Activated CD4-positive, alpha-beta memory T cell treated with anti-CD3 and anti-CD28 coated beads for 36 hours (primary cell): ENCODE measurements at regions of chr18 and their contacts with region 1.

Region 1: DNA sequence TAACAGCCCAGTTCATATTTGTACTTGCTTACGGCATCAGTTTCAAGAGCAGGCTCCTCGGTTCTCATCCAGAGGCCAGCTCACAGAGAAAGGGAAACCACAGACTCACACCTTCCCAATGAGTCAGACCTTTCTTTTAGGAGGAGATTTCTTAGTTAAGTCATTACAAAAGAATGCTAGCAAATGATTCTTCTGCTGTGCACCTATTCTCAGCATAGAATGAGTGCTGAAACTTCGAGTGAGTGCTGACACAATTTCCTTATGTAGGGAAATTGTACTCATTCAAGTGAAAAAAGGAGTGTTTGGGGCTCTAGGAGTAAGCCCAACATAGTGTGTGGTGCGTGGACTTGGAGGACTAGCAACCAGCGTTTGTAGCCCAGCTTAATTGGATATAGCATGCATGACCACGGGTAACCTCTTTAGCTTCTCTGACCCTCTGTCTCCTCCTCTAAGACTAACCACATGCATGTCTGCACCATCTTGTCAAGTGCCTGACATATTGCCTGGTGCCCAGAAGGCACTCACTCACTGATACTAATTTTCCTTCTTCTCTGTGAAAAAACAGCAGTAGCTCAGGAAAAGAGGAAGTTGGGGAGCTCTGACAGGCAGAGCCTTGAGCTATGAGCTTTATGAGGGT is 87.0 kb downstream of the ALPK2 start:
- DNase-seq: peak; percentile 80
- H3K4me3 Mint-ChIP-seq: no peak overlapping the region
- H3K27ac Mint-ChIP-seq: peak overlapping the region; percentile 89
- H3K4me1 Mint-ChIP-seq: peaks cover 80% of the 10 kb centered on the region
- H3K27me3 Mint-ChIP-seq: peaks cover 3% of the 10 kb centered on the region

Region 2: GRCh38 chr18:58392324-58393000 is 149.4 kb before region 1 on chr18:
- CTCF ChIA-PET with region 1: no interaction called
- POLR2A ChIA-PET with region 1: no interaction called
- intact Hi-C with region 1: no loop called
- DNase-seq: no peak
- H3K4me3 Mint-ChIP-seq: no peak overlapping the region
- H3K27ac Mint-ChIP-seq: no peak overlapping the region
- H3K4me1 Mint-ChIP-seq: peaks cover 5% of the 10 kb centered on the region
- H3K27me3 Mint-ChIP-seq: no peaks in the 10 kb centered on the region

Region 3: DNA sequence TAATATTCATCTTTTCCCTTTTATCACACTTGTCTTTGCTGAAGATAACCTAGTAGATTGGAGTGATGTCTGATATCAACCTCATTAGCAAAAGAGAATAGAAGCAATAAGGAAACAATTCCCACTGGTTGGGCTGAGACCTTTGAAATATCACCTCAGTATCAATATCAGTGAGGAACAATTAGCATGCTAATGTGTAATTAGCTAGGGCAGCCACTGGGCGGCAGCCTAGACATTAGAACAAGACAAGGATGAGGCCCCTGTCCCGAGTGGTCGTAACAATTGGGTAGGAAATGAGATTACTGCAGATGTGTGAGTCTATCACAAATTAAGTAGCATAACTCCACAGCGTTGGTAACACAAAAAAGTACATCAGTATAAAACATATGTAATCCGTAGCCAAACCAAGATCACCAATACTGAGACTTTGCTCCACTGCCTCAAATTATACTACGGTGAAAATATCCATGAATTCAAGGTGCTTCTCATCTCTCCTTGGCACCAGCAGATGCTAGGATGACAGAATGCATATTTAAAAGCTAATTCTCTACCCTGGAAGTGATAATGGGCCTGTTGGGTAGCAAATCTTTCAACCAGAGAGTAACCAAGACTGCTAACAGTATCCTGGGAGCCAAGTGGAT is 12.1 kb before region 1 on chr18:
- CTCF ChIA-PET with region 1: interaction called, 10 read pairs
- POLR2A ChIA-PET with region 1: no interaction called
- intact Hi-C with region 1: loop called (anchors 1 kb)
- DNase-seq: peak; percentile 76
- H3K4me3 Mint-ChIP-seq: no peak overlapping the region
- H3K27ac Mint-ChIP-seq: peak overlapping the region; percentile 43
- H3K4me1 Mint-ChIP-seq: peaks cover 19% of the 10 kb centered on the region
- H3K27me3 Mint-ChIP-seq: peaks cover 6% of the 10 kb centered on the region

Region 4: DNA sequence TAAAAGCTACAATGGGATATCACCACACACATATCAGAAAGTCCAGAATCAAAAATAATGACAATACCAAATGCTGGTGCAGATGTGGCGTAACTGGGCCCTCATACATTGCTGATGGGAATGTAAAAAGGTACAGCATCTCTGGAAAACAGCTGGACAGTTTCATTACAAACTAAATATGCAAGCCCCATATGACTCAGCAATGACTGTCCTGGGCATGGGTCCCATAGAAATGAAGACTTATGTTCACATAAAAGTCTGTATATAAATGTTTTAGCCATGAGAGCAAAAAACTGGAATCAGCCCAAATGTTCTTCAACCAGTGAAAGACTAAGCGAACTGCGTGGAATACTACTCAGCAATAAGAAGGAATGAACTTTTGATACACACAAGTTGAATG is 30.3 kb after region 1 on chr18:
- CTCF ChIA-PET with region 1: no interaction called
- POLR2A ChIA-PET with region 1: interaction called, 6 read pairs
- intact Hi-C with region 1: loop called (anchors 1 kb)
- DNase-seq: no peak
- H3K4me3 Mint-ChIP-seq: no peak overlapping the region
- H3K27ac Mint-ChIP-seq: no peak overlapping the region
- H3K4me1 Mint-ChIP-seq: peaks cover 15% of the 10 kb centered on the region
- H3K27me3 Mint-ChIP-seq: no peaks in the 10 kb centered on the region

Region 5: GRCh38 chr18:58615140-58616132 is 73.5 kb after region 1 on chr18:
- CTCF ChIA-PET with region 1: interaction called, 5 read pairs
- POLR2A ChIA-PET with region 1: interaction called, 11 read pairs
- intact Hi-C with region 1: loop called (anchors 1 kb)
- DNase-seq: peak; percentile 87
- H3K4me3 Mint-ChIP-seq: peak overlapping the region; percentile 51
- H3K27ac Mint-ChIP-seq: peak overlapping the region; percentile 90
- H3K4me1 Mint-ChIP-seq: peaks cover 54% of the 10 kb centered on the region
- H3K27me3 Mint-ChIP-seq: peaks cover 4% of the 10 kb centered on the region

Region 6: DNA sequence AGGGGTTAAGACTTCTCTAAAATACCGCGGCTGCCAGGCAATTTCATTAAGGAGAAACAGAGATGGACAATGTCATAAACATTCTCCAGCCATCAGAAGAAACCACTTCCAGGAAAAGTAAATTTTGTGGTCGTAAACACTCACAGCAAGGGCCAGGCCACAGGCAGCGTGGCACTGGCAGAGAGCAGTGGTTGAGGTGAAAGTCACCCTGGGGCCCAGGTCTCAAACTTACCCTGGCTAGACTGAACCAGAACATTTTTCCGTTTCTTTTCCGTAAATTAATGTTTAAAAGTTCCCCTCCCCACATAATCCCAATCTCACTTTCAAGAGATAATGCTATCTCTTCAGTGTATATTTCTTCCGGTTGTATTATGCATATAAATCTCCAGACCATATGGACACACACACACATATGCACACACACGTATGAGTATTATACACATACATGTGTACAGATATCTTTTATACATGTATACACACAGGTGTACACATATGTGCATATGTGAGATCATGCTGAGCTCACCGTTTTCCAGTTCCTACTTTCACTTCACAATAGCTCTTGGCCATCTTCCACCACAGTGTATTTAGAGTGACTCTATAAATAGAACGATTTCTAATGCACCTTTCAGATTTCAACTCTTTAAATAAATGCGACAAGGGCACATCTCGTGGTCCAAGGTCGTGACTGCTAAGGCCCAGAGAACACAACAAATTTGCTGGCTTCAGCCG is 219.5 kb after region 1 on chr18:
- CTCF ChIA-PET with region 1: interaction called, 35 read pairs
- POLR2A ChIA-PET with region 1: interaction called, 3 read pairs
- intact Hi-C with region 1: no loop called
- DNase-seq: peak; percentile 41
- H3K4me3 Mint-ChIP-seq: no peak overlapping the region
- H3K27ac Mint-ChIP-seq: no peak overlapping the region
- H3K4me1 Mint-ChIP-seq: peaks cover 18% of the 10 kb centered on the region
- H3K27me3 Mint-ChIP-seq: peaks cover 13% of the 10 kb centered on the region

Region 7: DNA sequence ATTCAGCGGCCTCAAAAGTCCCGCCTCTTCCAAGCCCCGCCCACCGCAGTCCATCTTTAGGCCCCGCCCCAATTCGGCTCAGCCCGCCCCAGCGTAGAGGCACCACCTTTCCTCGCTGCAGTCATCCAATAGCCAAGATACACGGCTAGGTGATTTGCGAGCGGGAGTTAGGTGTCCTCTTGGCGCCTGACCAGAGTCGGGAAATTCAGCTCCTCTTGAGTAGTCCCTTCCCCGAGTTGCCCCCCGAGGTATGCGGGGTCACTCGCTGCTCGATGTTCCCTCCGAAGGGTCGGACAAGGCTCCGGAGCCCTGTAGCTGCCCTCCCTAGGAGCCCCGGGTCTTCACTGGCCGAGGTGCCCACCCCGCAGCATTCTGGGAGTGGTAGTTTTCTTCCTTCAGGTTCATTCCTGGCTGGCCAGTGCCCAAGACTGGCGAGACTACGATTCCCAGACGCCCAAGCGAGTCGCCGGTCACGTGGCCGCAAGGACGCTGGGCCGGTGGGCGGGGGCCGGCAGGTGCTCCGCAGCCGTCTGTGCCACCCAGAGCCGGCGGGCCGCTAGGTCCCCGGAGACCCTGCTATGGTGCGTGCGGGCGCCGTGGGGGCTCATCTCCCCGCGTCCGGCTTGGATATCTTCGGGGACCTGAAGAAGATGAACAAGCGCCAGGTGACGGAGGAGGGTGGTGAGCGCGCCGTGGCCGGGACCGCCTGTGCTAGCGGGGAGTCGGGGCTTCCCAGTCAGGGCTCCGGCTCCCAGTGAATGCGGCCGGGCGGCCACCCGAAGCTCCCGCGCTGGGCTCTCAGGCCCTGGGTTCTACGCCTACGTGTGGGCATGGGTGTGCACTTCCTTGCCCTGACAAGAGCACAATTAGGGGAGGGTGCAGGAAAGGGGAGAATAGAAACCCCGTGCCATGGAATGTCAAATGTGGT is 597.7 kb after region 1 on chr18 and contains the start of gene SEC11C:
- CTCF ChIA-PET with region 1: no interaction called
- POLR2A ChIA-PET with region 1: no interaction called
- intact Hi-C with region 1: loop called (anchors 1 kb)
- DNase-seq: peak; percentile 97
- H3K4me3 Mint-ChIP-seq: peak within 1 kb of the TSS; percentile 94
- H3K27ac Mint-ChIP-seq: peak within 1 kb of the TSS; percentile 98
- H3K4me1 Mint-ChIP-seq: peaks cover 38% of the 10 kb centered on the region
- H3K27me3 Mint-ChIP-seq: peaks cover 6% of the 10 kb centered on the region
- total RNA-seq, gene SEC11C: 119 to 130 TPM